Activated CD8-positive, alpha-beta T cell treated with anti-CD3 and anti-CD28 coated beads for 36 hours (primary cell): ENCODE measurements at regions of chr6 and their contacts with region 1.

Region 1: DNA sequence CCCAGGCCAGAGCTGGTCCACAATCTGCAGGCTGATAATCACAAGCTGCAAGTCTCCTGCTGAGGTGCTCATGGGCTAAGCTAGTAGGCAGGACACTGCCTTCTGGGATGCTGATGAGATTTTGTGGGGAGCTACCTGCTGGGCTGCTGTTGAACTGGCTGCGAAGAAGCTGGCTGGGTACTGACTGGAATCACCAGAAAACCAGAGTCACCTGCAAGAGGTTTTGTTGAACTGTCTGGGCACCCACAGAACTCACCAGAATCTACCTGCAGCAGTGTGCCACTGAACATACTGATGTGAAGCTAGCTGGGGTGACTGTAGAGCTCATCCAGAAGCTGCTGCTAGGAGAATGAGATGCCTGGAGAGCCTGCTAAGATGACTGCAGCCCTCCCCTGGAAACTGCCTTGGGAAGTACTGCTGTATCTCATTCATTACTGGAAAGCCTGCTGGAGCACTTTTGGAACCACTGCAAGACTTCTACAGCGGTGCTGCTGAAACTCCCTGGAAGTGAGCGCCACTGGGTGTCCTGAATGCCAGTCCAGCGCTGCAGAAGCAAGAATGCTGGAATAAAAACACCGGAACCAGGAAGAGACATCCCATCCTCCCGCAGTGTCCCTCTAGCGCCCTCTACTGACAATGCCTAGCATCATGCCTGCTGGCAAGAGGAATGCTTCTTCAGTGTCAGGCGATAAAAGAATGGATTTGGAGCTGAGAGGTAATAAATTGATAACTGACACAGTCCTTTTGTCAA is 64.9 kb upstream of the ARHGAP18 start:
- DNase-seq: peak; percentile 61
- ATAC-seq: peak; percentile 49
- H3K4me3 Mint-ChIP-seq: no peak overlapping the region
- H3K27ac Mint-ChIP-seq: no peak overlapping the region
- H3K4me1 Mint-ChIP-seq: no peaks in the 10 kb centered on the region
- H3K27me3 Mint-ChIP-seq: peaks cover 3% of the 10 kb centered on the region
- CTCF ChIP-seq: peak; percentile 96

Region 2: DNA sequence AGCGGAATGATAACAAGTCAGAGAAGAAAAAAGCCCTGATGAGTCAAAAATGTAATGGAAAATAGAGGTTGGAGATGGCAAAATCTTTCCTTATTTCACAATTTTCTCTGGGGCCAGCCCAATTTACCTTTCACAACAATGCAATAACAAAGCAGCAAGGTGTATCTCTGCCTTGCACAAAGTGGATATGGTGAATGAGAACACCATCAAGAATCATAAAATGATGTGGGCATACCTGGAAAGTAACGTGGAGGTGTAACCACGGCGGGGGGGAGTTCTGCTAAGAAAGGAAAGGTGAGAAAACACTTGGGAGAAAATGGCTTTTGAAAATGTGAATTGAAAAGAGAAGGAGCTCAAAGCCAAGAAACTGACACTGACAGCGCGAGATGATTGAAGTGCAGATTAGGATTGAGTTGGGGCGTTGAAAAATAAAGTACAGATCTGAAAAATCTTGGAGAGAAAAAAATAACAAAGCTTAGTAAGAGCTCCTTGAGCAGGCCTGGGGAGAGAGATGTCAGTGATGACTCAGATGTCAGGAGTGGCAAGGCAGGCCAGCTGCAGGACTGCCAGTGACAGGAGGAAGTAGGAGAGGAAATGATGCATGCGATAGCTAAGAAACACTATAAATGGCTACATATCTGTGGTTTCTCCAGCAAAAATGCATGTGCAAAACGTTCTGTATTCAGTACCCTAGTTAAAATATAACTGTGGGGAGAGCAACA is 91.1 kb before region 1 on chr6:
- CTCF ChIA-PET with region 1: no interaction called
- POLR2A ChIA-PET with region 1: no interaction called
- intact Hi-C with region 1: no loop called
- DNase-seq: peak; percentile 80
- ATAC-seq: peak; percentile 93
- H3K4me3 Mint-ChIP-seq: peak overlapping the region; percentile 45
- H3K27ac Mint-ChIP-seq: peak overlapping the region; percentile 91
- H3K4me1 Mint-ChIP-seq: peaks cover 50% of the 10 kb centered on the region
- H3K27me3 Mint-ChIP-seq: no peaks in the 10 kb centered on the region
- CTCF ChIP-seq: no peak

Region 3: GRCh38 chr6:129785047-129785755 is 10.3 kb after region 1 on chr6:
- CTCF ChIA-PET with region 1: interaction called, 24 read pairs
- POLR2A ChIA-PET with region 1: no interaction called
- intact Hi-C with region 1: no loop called
- DNase-seq: no peak
- ATAC-seq: no peak
- H3K4me3 Mint-ChIP-seq: no peak overlapping the region
- H3K27ac Mint-ChIP-seq: no peak overlapping the region
- H3K4me1 Mint-ChIP-seq: no peaks in the 10 kb centered on the region
- H3K27me3 Mint-ChIP-seq: peaks cover 5% of the 10 kb centered on the region
- CTCF ChIP-seq: no peak

Region 4: DNA sequence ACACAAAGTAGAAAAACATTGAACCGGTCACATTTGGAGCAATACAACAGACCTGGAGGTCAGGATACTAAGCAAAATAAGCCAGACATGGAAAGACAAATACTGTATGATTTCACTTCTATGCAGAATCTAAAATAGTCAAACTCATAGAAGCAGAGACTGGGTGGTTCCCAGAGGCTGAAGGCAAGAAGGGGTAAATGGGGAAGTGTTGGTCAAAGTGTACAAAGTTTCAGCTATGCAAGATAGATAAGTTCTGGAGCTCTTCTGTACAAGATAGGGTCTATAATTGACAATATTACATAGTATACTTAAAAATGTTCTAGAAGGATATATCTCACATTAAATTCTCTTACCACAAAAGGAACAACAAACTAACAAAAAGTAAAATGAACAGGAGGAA is 15.9 kb after region 1 on chr6:
- CTCF ChIA-PET with region 1: interaction called, 24 read pairs
- POLR2A ChIA-PET with region 1: no interaction called
- intact Hi-C with region 1: no loop called
- DNase-seq: no peak
- ATAC-seq: no peak
- H3K4me3 Mint-ChIP-seq: no peak overlapping the region
- H3K27ac Mint-ChIP-seq: no peak overlapping the region
- H3K4me1 Mint-ChIP-seq: no peaks in the 10 kb centered on the region
- H3K27me3 Mint-ChIP-seq: peaks cover 8% of the 10 kb centered on the region
- CTCF ChIP-seq: no peak